ENCODE measurements at regions of chrX and their contacts with region 1.

Region 1: DNA sequence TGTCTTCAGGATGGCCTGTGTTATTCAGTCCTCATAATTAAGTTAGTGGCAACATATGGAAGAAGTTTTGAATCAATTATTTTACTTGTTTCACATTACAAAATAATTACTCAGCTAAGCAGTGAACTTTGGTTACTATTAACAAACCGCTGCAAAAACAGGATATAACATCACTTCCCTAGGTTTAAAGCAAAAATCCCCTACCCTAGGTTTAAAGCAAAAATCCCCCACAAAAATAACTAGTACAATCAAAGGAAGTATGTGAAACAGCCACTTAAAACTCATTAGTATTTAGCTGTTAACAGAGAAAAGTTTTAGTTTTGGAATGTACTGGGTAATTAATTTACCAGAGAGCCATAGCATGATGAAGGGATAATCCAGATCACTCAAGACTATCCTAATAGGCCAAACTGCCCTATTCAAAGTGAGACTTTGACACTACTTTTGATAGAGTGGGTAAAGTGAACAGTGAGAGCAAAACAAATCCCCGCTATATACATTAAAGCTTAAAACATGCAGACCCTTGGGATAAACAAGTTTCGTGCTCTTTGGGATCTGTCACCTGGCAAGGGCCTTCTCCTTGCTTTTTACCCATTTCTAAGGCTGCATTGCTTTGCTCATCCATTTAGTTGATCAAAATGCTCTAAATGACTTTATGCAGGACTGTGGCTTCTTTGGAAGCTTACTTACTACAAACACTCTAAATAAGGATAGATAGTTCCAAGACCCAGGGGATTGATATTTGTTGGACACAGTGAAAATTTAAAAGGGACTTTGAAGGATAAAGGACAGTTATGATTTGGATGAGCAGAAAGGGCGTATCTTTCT is 36.4 kb upstream of the GPR174 start:
- DNase-seq: no peak
- H3K4me3 Mint-ChIP-seq: peak overlapping the region; percentile 45
- H3K27ac Mint-ChIP-seq: peak overlapping the region; percentile 93
- H3K4me1 Mint-ChIP-seq: peaks cover 39% of the 10 kb centered on the region
- H3K27me3 Mint-ChIP-seq: no peaks in the 10 kb centered on the region

Region 2: GRCh38 chrX:79096145-79096556 is 12.0 kb before region 1 on chrX:
- intact Hi-C with region 1: loop called (anchors 1 kb)
- DNase-seq: no peak
- H3K4me3 Mint-ChIP-seq: peak overlapping the region; percentile 63
- H3K27ac Mint-ChIP-seq: peak overlapping the region; percentile 91
- H3K4me1 Mint-ChIP-seq: peaks cover 43% of the 10 kb centered on the region
- H3K27me3 Mint-ChIP-seq: no peaks in the 10 kb centered on the region